ENCODE measurements at regions of chr16 and their contacts with region 1.

Region 1: DNA sequence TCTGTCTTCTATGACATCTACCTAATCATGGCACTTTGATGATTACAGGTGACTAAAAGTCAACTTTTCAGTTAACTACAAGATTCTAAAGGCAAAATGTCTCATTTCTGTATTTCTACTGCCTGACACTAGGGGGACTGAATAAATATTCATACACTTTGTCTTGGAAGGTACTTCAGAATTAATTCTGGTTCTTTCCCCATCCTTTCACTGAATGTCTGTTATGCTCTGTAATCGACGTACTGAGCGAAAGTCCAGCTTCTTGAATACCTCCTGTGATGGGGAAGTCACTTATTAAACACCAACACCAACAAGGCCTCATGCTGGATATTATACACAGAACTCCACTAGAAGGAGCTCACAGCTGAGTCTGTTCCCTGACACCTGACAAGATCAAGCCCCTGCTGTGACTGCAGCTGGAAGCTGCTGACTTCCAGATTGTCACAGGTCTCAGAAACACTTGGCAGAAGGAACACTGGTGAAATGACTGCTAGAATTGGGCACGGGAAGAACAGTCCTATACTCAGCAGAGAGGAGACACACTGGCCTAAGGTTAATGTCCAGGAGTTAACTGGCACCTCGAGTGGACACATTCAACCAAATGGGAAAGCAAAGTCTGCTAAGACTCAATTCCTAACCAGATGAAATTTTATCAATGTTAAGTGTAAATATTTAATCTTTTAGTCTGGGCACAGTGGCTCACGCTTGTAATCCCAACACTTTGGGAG is 31.9 kb downstream of the CMC2 start:
- DNase-seq: no peak
- ATAC-seq: peak; percentile 49
- H3K4me3 ChIP-seq: no peak overlapping the region
- H3K27ac ChIP-seq: no peak overlapping the region
- H3K4me1 ChIP-seq: 0 out of 2 replicates have a peak, but pooled peaks cover 3% of the 10 kb centered on the region
- H3K27me3 ChIP-seq: no peaks in the 10 kb centered on the region
- CTCF ChIP-seq: peak; percentile 23 to 36 (median 26); a peak in 5 of 6 replicates
- EP300 ChIP-seq: no peak
- POLR2A ChIP-seq: no peak
- RAD21 ChIP-seq: 0 out of 2 replicates have a peak, but pooled peaks have one; percentile 5

Region 2: GRCh38 chr16:80816365-80816764 is 158.4 kb before region 1 on chr16:
- CTCF ChIA-PET with region 1: no interaction called
- POLR2A ChIA-PET with region 1: no interaction called
- RAD21 ChIA-PET with region 1: no interaction called
- SMC1A ChIA-PET with region 1: no interaction called
- in situ Hi-C with region 1: no loop called
- intact Hi-C with region 1: no loop called
- DNase-seq: no peak
- ATAC-seq: no peak
- H3K4me3 ChIP-seq: no peak overlapping the region
- H3K27ac ChIP-seq: no peak overlapping the region
- H3K4me1 ChIP-seq: no peaks in the 10 kb centered on the region
- H3K27me3 ChIP-seq: no peaks in the 10 kb centered on the region
- CTCF ChIP-seq: no peak
- EP300 ChIP-seq: no peak
- POLR2A ChIP-seq: no peak
- RAD21 ChIP-seq: no peak

Region 3: GRCh38 chr16:80986557-80986956 is 11.7 kb after region 1 on chr16:
- CTCF ChIA-PET with region 1: interaction called, 11 read pairs
- POLR2A ChIA-PET with region 1: interaction called, 7 read pairs
- RAD21 ChIA-PET with region 1: no interaction called
- SMC1A ChIA-PET with region 1: interaction called, 4 read pairs
- in situ Hi-C with region 1: no loop called
- intact Hi-C with region 1: no loop called
- DNase-seq: no peak
- ATAC-seq: no peak
- H3K4me3 ChIP-seq: no peak overlapping the region
- H3K27ac ChIP-seq: no peak overlapping the region
- H3K4me1 ChIP-seq: no peaks in the 10 kb centered on the region
- H3K27me3 ChIP-seq: no peaks in the 10 kb centered on the region
- CTCF ChIP-seq: no peak
- EP300 ChIP-seq: no peak
- POLR2A ChIP-seq: no peak
- RAD21 ChIP-seq: no peak

Region 4: DNA sequence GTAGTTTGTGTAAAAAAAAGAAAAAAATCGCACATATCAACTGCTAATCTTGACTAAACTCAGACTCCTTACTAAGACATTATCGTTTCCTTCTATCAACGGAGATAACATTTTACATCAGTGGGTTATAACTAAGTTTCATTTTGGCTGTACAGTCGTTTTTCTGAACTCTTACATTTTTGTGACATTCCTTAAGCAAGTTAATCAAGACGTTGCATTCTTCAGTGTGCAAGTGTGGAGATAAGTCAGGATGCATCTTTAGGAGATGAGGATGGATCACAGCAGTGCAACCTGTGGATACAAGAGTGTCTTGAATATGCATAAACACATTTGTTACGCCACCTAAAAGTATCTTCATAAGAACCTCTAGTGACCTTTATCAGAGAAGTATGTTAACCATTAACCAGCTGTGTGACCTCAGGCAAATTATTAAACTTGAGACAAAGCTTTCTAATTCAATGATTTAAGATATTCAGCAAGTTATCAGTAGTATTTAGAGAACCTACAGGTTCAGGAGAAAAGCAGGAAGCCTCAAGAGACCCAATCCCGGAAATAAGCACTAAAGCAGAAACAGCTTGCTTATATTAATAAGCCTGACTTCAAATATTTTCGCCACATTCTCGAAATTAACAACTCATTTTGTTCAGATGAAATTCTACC is 22.5 kb after region 1 on chr16:
- CTCF ChIA-PET with region 1: interaction called, 10 read pairs
- POLR2A ChIA-PET with region 1: interaction called, 6 read pairs
- RAD21 ChIA-PET with region 1: interaction called, 6 read pairs
- SMC1A ChIA-PET with region 1: interaction called, 8 read pairs
- in situ Hi-C with region 1: no loop called
- intact Hi-C with region 1: no loop called
- DNase-seq: peak; percentile 66
- ATAC-seq: peak; percentile 81
- H3K4me3 ChIP-seq: peak overlapping the region; percentile 60
- H3K27ac ChIP-seq: peak overlapping the region; percentile 83
- H3K4me1 ChIP-seq: no peaks in the 10 kb centered on the region; the same call in 1 of the 2 replicates
- H3K27me3 ChIP-seq: no peaks in the 10 kb centered on the region
- CTCF ChIP-seq: no peak
- EP300 ChIP-seq: peak in 1 of 2 experiments; percentile 33; a peak in 1 of 4 replicates
- POLR2A ChIP-seq: no peak
- RAD21 ChIP-seq: no peak

Measured in GM12878 (cell line).